ENCODE measurements at regions of chrX and their contacts with region 1.

Region 1: GRCh38 chrX:9475984-9476383 is 11.1 kb downstream of the TBL1X start:
- DNase-seq: no peak
- ATAC-seq: no peak
- H3K4me3 ChIP-seq: no peak overlapping the region
- H3K27ac ChIP-seq: no peak overlapping the region
- H3K4me1 ChIP-seq: peaks cover 0 to 8% (median 0%) of the 10 kb centered on the region in 12 donors
- H3K27me3 ChIP-seq: peaks cover 0 to 17% (median 0%) of the 10 kb centered on the region in 9 donors
- CTCF ChIP-seq: no peak
- POLR2A ChIP-seq: no peak

Region 2: DNA sequence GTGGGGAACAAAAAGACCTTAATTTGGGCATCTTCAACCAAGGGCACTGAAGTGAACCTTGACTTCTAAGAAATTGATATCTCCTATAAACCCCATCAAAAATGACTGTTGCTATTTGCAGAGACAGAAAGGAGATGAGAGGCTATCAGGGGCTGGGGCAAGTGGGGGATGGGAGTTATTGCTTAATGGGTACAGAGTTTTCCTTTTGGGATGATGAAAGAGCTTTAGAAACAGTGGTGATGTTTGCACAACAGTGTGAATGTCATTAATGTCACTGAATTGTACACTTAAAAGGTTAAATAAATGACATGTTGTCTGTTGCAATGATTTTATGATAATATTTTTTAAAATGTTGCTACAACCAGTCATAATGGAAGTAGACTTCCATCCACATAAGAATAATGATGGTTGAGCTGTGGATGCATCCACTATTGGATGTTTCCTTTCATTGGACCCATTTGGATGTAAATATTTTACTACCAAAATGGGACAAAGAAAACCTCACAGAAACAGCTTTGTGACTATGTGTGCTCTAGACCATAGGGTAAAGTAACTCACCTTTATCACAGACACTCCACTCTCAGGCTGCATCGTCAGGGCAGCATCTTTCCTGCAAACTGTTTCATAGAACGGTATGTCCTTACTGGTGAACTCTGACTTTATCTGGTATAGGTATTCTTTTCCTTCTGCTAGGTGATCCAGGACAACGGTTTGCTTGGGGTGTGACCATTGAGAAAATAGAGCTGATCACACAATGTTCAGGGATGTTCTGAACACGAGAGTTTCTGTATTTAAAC is 643.2 kb before region 1 on chrX:
- intact Hi-C with region 1: no loop called
- DNase-seq: no peak
- ATAC-seq: no peak
- H3K4me3 ChIP-seq: no peak overlapping the region
- H3K27ac ChIP-seq: no peak overlapping the region
- H3K4me1 ChIP-seq: no peaks in the 10 kb centered on the region
- H3K27me3 ChIP-seq: peaks cover 0 to 32% (median 0%) of the 10 kb centered on the region in 9 donors
- CTCF ChIP-seq: no peak
- POLR2A ChIP-seq: no peak

Region 3: DNA sequence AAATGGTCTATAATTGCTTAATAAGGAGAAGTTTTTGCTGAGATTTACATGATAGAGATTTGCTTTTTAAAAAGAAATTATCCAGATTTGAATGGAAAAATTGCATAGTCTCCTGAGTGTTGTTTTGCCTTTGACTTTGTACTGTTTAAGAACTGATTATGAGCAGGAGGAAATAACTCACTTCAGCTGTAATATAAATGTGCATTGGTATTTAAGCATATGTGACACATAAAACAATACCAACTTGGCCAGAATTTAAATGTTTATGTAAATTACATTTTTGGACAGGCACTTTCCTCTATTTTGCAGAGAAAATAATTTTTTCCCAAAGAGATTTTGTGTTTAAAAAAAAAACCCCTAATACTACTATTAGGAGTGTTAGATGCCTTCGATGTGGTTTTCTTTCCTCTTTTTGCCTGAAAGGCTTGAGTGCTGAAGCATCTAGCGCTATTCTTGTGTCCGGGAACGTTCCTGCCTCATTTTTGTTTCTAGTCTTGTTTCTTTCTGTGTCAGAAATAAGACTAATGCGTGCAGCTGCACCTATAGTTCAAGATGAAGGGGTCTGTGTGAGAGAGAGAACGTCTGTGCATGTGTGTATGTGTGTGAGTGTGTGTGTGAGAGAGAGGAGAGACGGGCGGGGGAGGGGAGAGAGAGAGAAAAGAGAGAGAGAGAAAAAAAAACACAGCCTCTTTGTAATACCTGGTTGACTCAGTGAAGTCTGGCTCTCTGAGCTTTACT is 49.7 kb after region 1 on chrX:
- intact Hi-C with region 1: loop called in 1 of 10 experiments (anchors 10 kb)
- DNase-seq: no peak
- ATAC-seq: no peak
- H3K4me3 ChIP-seq: no peak overlapping the region
- H3K27ac ChIP-seq: no peak overlapping the region
- H3K4me1 ChIP-seq: peaks cover 0 to 11% (median 2%) of the 10 kb centered on the region in 12 donors
- H3K27me3 ChIP-seq: peaks cover 0 to 16% (median 0%) of the 10 kb centered on the region in 9 donors
- CTCF ChIP-seq: no peak
- POLR2A ChIP-seq: no peak

Region 4: DNA sequence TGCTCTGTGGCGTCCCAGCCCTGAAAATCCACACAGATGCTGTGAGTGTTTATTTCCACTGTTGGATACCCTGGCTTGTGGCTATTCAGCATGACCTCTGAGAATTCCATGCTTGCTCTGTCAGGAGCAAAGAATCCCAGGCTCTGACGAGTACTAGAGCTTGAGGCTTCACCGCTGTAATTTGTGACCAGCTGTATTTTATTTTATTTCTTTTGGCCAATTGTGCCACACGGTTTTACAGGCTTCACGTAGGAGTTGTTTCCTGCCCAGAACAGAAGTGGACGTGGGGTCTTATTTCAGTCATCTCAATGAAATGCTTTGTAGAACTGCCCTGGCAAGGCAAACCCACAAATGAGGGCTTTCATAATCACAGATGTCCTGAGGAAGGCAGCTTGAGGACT is 421.8 kb after region 1 on chrX:
- intact Hi-C with region 1: no loop called
- DNase-seq: no peak
- ATAC-seq: peak in 3 of 4 donors; percentile 20 to 63 (median 38)
- H3K4me3 ChIP-seq: no peak overlapping the region
- H3K27ac ChIP-seq: peak overlapping the region in 1 of 12 donors; percentile 19
- H3K4me1 ChIP-seq: no peaks in the 10 kb centered on the region
- H3K27me3 ChIP-seq: peaks cover 0 to 5% (median 0%) of the 10 kb centered on the region in 9 donors
- CTCF ChIP-seq: no peak
- POLR2A ChIP-seq: no peak